ENCODE measurements at regions of chr6 and their contacts with region 1.

Region 1: DNA sequence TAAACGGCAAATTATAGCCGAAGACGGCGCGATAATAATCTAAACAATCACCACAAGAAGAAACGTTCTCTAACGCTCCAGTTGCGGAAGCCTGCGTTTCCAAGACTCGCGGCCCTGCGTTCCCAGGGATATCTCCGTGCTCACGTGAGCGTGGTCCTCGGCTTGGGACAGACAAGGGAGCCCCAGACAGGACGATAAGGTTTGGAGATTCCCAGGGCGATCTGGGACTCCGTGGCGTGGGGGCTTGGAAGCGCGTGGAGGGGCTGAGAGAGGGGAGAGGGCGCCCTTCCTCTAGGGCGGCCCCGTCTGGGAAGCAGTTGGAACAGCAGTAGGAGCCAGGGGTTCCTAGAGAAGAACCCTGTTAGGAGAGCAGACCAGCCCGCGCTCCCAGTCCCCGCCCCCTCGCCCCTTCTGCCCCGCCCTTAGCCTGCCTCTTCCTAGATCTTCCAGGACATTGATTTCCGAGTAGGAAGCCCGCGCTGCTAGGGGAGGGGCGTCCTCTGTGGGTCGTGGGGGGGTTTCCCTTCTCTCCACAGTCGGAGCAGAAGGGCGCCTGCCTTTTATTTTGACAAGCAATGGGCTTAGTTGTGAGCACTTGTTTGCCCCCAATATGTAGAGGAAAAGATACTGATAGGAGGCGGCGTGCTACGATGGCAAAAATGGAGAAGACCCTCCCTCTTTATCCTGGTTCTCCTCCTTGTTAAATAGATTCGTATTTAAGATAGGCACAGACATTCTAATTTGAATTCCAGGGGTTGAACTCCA is 10.6 kb downstream of the NRN1 start:
- DNase-seq: peak; percentile 79
- H3K4me3 ChIP-seq: peak overlapping the region; percentile 56 to 99 (median 97)
- H3K27ac ChIP-seq: peak overlapping the region; percentile 18
- H3K4me1 ChIP-seq: peaks cover 9% of the 10 kb centered on the region
- H3K27me3 ChIP-seq: peaks cover 34 to 72% of the 10 kb centered on the region in 2 experiments
- CTCF ChIP-seq: peak; percentile 13 to 47
- POLR2A ChIP-seq: no peak

Region 2: GRCh38 chr6:5422321-5422915 is 573.7 kb before region 1 on chr6:
- CTCF ChIA-PET with region 1: interaction called, 3 read pairs
- POLR2A ChIA-PET with region 1: no interaction called
- dilution Hi-C with region 1: no loop called
- intact Hi-C with region 1: loop called (anchors 1 kb)
- DNase-seq: peak; percentile 40
- H3K4me3 ChIP-seq: no peak overlapping the region
- H3K27ac ChIP-seq: no peak overlapping the region
- H3K4me1 ChIP-seq: no peaks in the 10 kb centered on the region
- H3K27me3 ChIP-seq: no peaks in the 10 kb centered on the region
- CTCF ChIP-seq: peak; percentile 40 to 55
- POLR2A ChIP-seq: no peak

Region 3: DNA sequence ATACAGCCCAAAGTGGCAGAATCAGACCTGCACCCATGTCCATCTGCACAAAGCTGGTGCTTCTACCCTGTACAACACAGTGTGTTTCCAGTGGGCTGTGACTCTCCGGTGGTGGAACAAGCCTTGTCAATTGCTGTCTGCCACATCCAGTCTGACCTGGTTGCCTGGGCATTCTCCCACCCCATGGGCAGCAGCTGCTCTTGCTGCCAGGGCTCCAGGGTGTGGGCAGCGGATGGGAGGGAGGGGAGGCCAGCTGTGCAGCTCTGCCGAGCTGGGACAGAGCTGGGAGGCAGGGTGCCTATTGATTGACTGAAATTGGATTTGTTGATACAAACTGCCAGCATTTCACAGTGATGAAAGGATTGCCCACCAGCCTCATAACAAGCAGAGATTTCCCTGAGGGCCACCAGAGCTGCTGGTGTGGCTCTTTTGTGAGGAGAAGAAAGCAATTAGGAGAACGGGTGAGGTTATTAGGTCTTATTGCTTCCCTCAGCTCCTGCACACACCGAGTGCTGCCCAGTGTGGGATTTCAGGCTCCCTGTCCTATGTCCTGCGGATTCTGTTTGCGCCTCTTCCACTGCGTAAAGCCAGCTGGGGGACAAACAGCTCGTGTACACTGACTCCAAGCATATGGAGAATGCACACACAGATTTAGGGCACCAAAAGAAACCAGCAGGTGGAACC is 140.2 kb before region 1 on chr6:
- CTCF ChIA-PET with region 1: no interaction called
- POLR2A ChIA-PET with region 1: no interaction called
- dilution Hi-C with region 1: no loop called
- intact Hi-C with region 1: no loop called
- DNase-seq: no peak
- H3K4me3 ChIP-seq: no peak overlapping the region
- H3K27ac ChIP-seq: no peak overlapping the region
- H3K4me1 ChIP-seq: no peaks in the 10 kb centered on the region
- H3K27me3 ChIP-seq: no peaks in the 10 kb centered on the region
- CTCF ChIP-seq: no peak
- POLR2A ChIP-seq: no peak

Region 4: GRCh38 chr6:5950361-5950785 is 45.8 kb before region 1 on chr6:
- CTCF ChIA-PET with region 1: no interaction called
- POLR2A ChIA-PET with region 1: no interaction called
- dilution Hi-C with region 1: no loop called
- intact Hi-C with region 1: loop called (anchors 1 kb)
- DNase-seq: peak; percentile 44
- H3K4me3 ChIP-seq: no peak overlapping the region
- H3K27ac ChIP-seq: no peak overlapping the region
- H3K4me1 ChIP-seq: no peaks in the 10 kb centered on the region
- H3K27me3 ChIP-seq: no peaks in the 10 kb centered on the region
- CTCF ChIP-seq: peak; percentile 52 to 63
- POLR2A ChIP-seq: no peak

Region 5: DNA sequence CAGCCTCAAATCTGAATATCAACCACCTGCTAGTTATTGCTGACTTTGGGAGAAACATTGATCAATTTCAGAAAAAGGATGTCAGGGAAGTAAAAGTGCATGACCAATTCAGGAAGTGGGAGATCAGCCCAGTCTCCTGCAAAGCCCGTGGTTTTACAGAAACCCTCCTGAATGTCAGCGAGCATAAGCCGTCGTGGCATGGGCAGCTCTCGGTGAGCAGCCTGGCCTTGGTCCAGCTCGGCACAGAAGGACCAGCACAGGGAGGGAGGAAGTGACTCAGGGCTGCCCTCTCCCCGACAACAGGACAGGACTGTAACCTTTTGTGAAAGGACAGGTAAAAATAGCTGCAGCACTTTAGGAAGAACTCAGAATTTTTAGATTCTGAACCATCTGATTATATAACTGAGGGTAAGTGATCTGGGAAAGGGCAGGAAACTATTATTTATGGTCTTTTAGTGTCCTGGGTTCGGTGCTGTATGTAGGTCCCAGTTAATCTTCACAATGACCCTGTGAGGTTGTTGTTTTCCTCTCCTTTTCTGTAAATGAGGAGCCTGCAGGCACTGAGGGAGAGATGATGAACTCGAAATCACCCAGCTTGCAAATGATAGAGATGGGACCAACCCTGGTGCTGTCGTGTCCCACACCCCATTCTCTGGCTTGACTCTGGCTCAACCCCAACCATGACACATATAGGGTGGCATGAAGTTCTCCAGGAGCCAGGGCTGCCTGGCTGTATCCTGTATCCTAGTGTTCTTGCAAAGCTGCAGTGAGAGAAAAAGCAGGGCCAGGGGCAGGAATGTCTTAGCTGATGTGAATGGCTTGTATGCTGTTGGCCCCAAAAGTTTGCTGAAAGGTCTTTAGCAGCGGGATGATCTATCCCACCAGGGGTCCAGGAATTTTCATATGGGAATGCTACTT is 27.1 kb before region 1 on chr6:
- CTCF ChIA-PET with region 1: no interaction called
- POLR2A ChIA-PET with region 1: no interaction called
- dilution Hi-C with region 1: no loop called
- intact Hi-C with region 1: loop called (anchors 1 kb)
- DNase-seq: peak; percentile 44
- H3K4me3 ChIP-seq: no peak overlapping the region
- H3K27ac ChIP-seq: no peak overlapping the region
- H3K4me1 ChIP-seq: peaks cover 10% of the 10 kb centered on the region
- H3K27me3 ChIP-seq: no peaks in the 10 kb centered on the region
- CTCF ChIP-seq: no peak
- POLR2A ChIP-seq: no peak

Region 6: GRCh38 chr6:6008648-6009421 is 12.7 kb after region 1 on chr6:
- CTCF ChIA-PET with region 1: interaction called, 8 read pairs
- POLR2A ChIA-PET with region 1: no interaction called
- dilution Hi-C with region 1: no loop called
- intact Hi-C with region 1: loop called (anchors 1 kb)
- DNase-seq: peak; percentile 86
- H3K4me3 ChIP-seq: peak overlapping the region; percentile 21 to 86 (median 43)
- H3K27ac ChIP-seq: no peak overlapping the region
- H3K4me1 ChIP-seq: peaks cover 21% of the 10 kb centered on the region
- H3K27me3 ChIP-seq: peaks cover 34 to 57% of the 10 kb centered on the region in 2 experiments
- CTCF ChIP-seq: no peak
- POLR2A ChIP-seq: no peak

Region 7: DNA sequence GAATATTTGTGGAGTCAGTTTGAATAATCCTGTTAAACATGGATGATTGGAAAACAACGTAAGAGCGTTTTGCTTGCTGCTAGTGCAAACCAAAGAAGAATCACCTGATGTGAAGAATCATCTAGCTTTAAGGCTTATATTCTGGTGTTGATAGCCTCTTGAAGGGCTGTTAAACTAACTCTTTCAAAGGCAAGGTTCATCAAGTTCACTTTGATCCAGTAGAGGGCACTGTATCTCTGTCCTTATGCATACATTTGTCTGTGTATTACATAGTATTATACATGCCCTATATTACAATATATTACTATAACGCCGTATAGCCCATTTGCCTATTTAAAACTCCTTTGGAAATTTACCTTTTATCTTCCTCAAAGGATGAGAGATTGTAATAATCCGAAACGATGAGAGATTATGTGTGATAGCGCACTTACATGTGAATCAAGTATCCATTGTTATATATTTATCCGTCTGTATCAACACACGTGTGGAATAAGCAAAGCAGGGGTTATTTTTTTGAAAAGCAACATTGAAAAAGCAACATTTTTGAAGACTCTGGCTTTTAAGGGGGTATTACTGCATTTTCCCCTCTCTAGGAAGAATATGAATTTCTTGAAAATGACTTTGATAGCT is 61.4 kb after region 1 on chr6:
- CTCF ChIA-PET with region 1: no interaction called
- POLR2A ChIA-PET with region 1: no interaction called
- dilution Hi-C with region 1: no loop called
- intact Hi-C with region 1: no loop called
- DNase-seq: peak; percentile 57
- H3K4me3 ChIP-seq: no peak overlapping the region
- H3K27ac ChIP-seq: no peak overlapping the region
- H3K4me1 ChIP-seq: no peaks in the 10 kb centered on the region
- H3K27me3 ChIP-seq: no peaks in the 10 kb centered on the region
- CTCF ChIP-seq: peak; percentile 34 to 50
- POLR2A ChIP-seq: no peak

Measured in endothelial cell of umbilical vein (primary cell).